MCF 10A (cell line): ENCODE measurements at regions of chr15 and their contacts with region 1.

Region 1: DNA sequence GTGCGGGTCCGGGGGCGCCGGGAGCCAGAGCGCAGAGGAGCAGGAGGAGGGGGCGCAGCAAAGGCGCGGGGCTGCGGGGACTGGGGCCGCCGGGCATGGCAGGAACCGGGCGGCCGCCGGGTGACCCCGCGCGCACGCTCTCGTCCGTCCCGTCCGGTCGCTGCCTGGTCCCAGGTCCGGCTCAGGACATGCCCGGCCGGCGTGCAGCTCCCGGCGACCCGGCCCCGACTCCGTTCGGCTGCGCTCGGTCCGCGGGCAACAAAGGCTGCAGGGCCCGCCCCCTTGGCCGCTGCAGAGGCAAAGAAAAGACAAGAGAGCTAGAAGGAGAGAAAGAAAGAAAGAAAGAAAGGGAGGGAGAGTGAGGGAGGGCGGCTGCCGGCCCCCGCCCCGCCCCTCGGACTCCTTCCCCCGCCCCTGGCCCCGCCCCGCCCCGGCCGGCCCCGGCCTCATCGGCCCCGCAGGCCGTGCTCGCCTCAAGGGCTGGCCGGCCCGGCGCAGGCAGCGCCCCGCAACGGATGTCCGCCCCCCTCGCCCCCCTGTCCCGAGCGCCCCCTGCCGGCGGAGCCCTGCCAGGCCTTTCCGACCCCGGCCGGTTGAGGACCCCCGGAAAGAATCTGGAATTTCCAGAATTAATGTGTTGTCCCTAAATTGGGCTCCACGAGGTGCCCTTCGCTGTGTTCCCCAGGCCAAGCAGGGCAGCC is at the start of gene ADAMTS7:
- DNase-seq: peak; percentile 58
- H3K4me3 Mint-ChIP-seq: peak within 1 kb of the TSS; percentile 83
- H3K27ac Mint-ChIP-seq: peak within 1 kb of the TSS; percentile 39
- H3K4me1 Mint-ChIP-seq: peaks cover 14% of the 10 kb centered on the region
- H3K27me3 Mint-ChIP-seq: no peaks in the 10 kb centered on the region
- CTCF ChIP-seq: peak; percentile 64
- total RNA-seq, gene ADAMTS7: 10.7 and 10.8 TPM in 2 replicates

Region 2: GRCh38 chr15:78695854-78696253 is 115.4 kb before region 1 on chr15:
- CTCF ChIA-PET with region 1: no interaction called
- POLR2A ChIA-PET with region 1: no interaction called
- intact Hi-C with region 1: no loop called
- DNase-seq: no peak
- H3K4me3 Mint-ChIP-seq: no peak overlapping the region
- H3K27ac Mint-ChIP-seq: no peak overlapping the region
- H3K4me1 Mint-ChIP-seq: no peaks in the 10 kb centered on the region
- H3K27me3 Mint-ChIP-seq: peaks cover 30% of the 10 kb centered on the region
- CTCF ChIP-seq: no peak

Region 3: GRCh38 chr15:78757636-78757905 is 53.7 kb before region 1 on chr15:
- CTCF ChIA-PET with region 1: interaction called, 4 read pairs
- POLR2A ChIA-PET with region 1: no interaction called
- intact Hi-C with region 1: loop called (anchors 2 kb)
- DNase-seq: no peak
- H3K4me3 Mint-ChIP-seq: no peak overlapping the region
- H3K27ac Mint-ChIP-seq: no peak overlapping the region
- H3K4me1 Mint-ChIP-seq: peaks cover 17% of the 10 kb centered on the region
- H3K27me3 Mint-ChIP-seq: no peaks in the 10 kb centered on the region
- CTCF ChIP-seq: no peak

Region 4: DNA sequence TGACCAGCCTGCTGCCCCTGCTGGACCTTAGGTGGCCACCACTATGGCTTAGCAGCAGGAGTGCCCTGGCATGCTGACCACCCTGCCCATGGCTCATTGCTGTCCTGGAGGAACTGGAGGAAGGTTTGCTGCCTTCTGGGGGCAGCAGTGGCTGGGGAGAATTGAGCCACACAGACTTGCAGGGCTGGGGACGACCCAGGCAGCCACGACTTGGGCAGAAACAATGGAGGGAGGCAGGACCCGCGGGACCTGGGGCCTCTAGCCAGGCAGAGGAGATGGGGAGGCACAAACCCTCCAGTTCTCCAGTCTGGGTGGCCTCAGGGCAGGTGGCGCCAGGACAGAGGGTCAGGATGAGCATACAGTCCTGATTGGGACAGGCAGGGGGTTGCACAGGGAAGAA is 32.9 kb before region 1 on chr15:
- CTCF ChIA-PET with region 1: no interaction called
- POLR2A ChIA-PET with region 1: no interaction called
- intact Hi-C with region 1: no loop called
- DNase-seq: no peak
- H3K4me3 Mint-ChIP-seq: no peak overlapping the region
- H3K27ac Mint-ChIP-seq: peak overlapping the region; percentile 81
- H3K4me1 Mint-ChIP-seq: no peaks in the 10 kb centered on the region
- H3K27me3 Mint-ChIP-seq: no peaks in the 10 kb centered on the region
- CTCF ChIP-seq: no peak

Region 5: GRCh38 chr15:78795670-78796069 is 15.6 kb before region 1 on chr15:
- CTCF ChIA-PET with region 1: interaction called, 10 read pairs
- POLR2A ChIA-PET with region 1: interaction called, 6 read pairs
- intact Hi-C with region 1: no loop called
- DNase-seq: no peak
- H3K4me3 Mint-ChIP-seq: no peak overlapping the region
- H3K27ac Mint-ChIP-seq: peak overlapping the region; percentile 39
- H3K4me1 Mint-ChIP-seq: peaks cover 19% of the 10 kb centered on the region
- H3K27me3 Mint-ChIP-seq: no peaks in the 10 kb centered on the region
- CTCF ChIP-seq: no peak